Activated CD4-positive, alpha-beta T cell treated with anti-CD3 and anti-CD28 coated beads for 36 hours (primary cell): ENCODE measurements at regions of chr19 and their contacts with region 1.

Region 1: DNA sequence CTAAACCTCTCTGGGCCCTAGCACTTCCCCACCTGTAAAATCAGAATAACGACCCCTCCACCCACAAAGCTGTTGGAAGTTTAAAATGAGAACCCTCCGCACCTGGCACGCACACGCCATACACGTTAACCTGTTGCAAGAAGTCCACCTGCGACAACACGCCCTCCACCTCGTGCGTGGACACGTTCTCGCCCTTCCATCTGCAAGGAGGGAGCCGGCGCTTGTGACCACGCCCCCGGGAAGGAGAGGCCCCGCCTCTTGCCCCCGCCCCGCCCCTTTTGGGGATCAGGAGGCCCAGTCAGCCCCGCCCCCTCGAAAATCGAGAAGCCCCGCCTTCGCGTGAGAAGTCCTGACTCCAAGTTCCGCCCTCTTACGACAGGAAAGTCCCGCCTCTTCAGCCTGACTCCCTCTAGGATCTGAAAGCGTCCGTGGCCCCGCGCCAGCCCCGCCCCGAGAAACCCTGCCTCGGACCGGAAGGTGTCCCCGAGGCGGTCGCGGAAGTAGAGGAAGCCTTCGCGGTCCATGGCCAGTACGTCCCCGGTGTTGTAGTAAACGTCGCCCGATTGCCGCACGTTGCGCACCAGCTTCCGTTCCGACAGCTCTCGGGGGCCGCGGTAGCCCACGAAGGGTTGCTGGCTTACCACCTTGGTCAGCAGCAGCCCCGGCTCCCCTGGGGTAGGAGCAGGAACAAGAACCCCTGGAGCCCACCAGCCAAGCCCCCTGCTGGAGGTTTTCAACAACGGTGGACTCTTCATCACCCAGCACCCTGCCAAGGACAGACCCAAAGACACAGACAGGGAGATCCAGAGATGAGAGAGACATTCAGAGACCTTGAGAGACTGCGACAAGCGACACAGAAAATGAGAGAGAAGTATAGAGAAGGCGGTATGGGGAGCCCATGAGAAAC is 12.5 kb downstream of the SLC27A5 start:
- DNase-seq: peak; percentile 100
- ATAC-seq: peak; percentile 99
- H3K4me3 Mint-ChIP-seq: peak overlapping the region; percentile 81
- H3K27ac Mint-ChIP-seq: peak overlapping the region; percentile 95
- H3K4me1 Mint-ChIP-seq: peaks cover 19% of the 10 kb centered on the region
- H3K27me3 Mint-ChIP-seq: no peaks in the 10 kb centered on the region

Region 2: GRCh38 chr19:58268344-58268743 is 230.9 kb before region 1 on chr19:
- CTCF ChIA-PET with region 1: no interaction called
- POLR2A ChIA-PET with region 1: no interaction called
- intact Hi-C with region 1: no loop called
- DNase-seq: no peak
- ATAC-seq: no peak
- H3K4me3 Mint-ChIP-seq: no peak overlapping the region
- H3K27ac Mint-ChIP-seq: no peak overlapping the region
- H3K4me1 Mint-ChIP-seq: no peaks in the 10 kb centered on the region
- H3K27me3 Mint-ChIP-seq: no peaks in the 10 kb centered on the region

Region 3: GRCh38 chr19:58278157-58279041 is 220.9 kb before region 1 on chr19 and contains the start of gene ZNF8:
- CTCF ChIA-PET with region 1: no interaction called
- POLR2A ChIA-PET with region 1: no interaction called
- intact Hi-C with region 1: loop called in 1 of 2 experiments (anchors 1 kb)
- DNase-seq: peak; percentile 99
- ATAC-seq: peak; percentile 98
- H3K4me3 Mint-ChIP-seq: peak within 1 kb of the TSS; percentile 98
- H3K27ac Mint-ChIP-seq: peak within 1 kb of the TSS; percentile 95
- H3K4me1 Mint-ChIP-seq: peaks cover 28% of the 10 kb centered on the region
- H3K27me3 Mint-ChIP-seq: no peaks in the 10 kb centered on the region
- total RNA-seq, gene ZNF8: 4.4 to 4.5 TPM

Region 4: DNA sequence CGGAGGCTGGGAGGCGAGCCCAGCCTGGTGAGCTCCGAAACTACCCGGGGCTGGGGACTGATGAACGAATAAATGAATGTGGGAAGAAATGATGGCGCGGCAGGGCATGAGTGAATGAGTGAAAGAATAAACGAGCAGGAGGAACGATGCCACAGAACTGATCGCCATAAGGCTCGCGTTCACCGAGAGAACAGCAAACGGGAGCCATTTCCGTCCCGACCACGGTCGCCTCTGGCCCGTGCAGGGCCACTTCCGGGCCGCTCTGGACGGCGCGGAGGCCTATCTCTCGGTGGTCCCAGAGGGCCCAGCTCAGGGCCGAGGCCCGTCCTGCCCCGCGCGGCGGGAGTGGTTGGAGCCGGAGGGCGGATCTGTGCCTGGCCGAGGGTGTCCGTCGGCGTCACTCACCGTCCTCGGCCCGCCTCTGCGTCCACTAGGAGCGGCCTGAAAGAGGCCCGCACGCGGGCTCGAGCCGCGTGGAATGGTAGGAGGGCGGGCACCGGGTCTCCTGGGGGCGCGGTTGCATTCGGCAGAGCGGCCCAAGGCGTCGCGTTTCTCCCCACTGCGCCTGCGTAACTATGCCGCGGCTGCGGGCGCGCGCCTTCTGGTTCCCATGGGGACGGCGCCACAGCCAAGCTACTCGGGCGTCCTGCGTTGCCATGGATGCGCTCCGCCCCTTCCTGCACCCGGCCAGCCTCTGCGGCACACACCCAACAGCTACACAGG is 136.8 kb before region 1 on chr19 and contains the start of gene ZNF497:
- CTCF ChIA-PET with region 1: no interaction called
- POLR2A ChIA-PET with region 1: no interaction called
- intact Hi-C with region 1: loop called in 1 of 2 experiments (anchors 1 kb)
- DNase-seq: peak; percentile 99
- ATAC-seq: peak; percentile 94
- H3K4me3 Mint-ChIP-seq: peak within 1 kb of the TSS; percentile 86
- H3K27ac Mint-ChIP-seq: peak within 1 kb of the TSS; percentile 93
- H3K4me1 Mint-ChIP-seq: peaks cover 7% of the 10 kb centered on the region
- H3K27me3 Mint-ChIP-seq: no peaks in the 10 kb centered on the region
- total RNA-seq, gene ZNF497: 1.1 to 1.5 TPM

Region 5: GRCh38 chr19:58408152-58409009 is 90.9 kb before region 1 on chr19 and contains the start of gene ZNF584:
- CTCF ChIA-PET with region 1: interaction called, 3 read pairs
- POLR2A ChIA-PET with region 1: no interaction called
- intact Hi-C with region 1: loop called in 1 of 2 experiments (anchors 1 kb)
- DNase-seq: peak; percentile 97
- ATAC-seq: peak; percentile 97
- H3K4me3 Mint-ChIP-seq: peak within 1 kb of the TSS; percentile 84
- H3K27ac Mint-ChIP-seq: peak within 1 kb of the TSS; percentile 92
- H3K4me1 Mint-ChIP-seq: peaks cover 29% of the 10 kb centered on the region
- H3K27me3 Mint-ChIP-seq: no peaks in the 10 kb centered on the region
- total RNA-seq, gene ZNF584: 9.9 to 11.2 TPM

Region 6: DNA sequence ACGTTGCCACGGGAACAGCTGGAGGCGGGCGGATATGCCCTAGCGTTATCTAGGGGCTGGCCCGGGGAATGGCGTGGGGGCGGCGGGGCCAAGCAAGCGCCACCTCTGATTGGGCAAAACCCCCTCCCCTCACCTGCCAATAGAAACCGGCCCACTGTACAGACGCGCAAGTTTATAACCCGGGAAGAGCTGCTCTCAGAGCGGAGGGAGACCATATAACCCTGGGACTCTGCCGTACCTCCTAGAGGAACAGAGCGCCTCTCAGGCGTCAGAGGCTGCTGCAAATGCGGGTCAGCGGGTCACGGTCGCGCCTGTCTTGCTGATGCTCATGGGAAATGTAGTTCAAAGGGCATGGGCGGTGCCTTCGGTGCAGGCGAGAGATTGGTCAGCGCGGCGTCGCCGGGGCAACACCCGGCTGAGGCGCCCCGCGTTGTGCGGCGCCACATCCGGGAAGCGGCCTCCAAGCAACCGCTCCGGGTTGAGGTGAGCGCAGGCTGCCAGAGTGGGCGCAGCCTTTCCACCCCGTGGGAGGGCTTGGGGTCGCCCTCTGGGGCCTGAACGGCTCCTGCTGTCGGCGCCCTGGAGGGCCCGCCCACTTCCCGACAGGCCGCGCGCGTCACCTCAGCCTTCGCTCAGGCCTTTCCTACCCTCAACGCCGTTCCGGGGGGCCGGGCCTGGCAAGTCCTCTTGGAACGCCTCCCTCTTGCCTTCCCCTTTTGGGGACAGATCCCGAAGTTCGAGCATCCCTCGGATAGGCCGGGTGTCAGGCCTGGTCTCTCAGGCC is 23.4 kb before region 1 on chr19 and contains the start of gene ZNF446:
- CTCF ChIA-PET with region 1: no interaction called
- POLR2A ChIA-PET with region 1: no interaction called
- intact Hi-C with region 1: loop called (anchors 1 kb)
- DNase-seq: peak; percentile 98
- ATAC-seq: peak; percentile 92
- H3K4me3 Mint-ChIP-seq: peak within 1 kb of the TSS; percentile 83
- H3K27ac Mint-ChIP-seq: peak within 1 kb of the TSS; percentile 96
- H3K4me1 Mint-ChIP-seq: peaks cover 14% of the 10 kb centered on the region
- H3K27me3 Mint-ChIP-seq: no peaks in the 10 kb centered on the region
- total RNA-seq, gene ZNF446: 4.2 to 4.7 TPM

Region 7: DNA sequence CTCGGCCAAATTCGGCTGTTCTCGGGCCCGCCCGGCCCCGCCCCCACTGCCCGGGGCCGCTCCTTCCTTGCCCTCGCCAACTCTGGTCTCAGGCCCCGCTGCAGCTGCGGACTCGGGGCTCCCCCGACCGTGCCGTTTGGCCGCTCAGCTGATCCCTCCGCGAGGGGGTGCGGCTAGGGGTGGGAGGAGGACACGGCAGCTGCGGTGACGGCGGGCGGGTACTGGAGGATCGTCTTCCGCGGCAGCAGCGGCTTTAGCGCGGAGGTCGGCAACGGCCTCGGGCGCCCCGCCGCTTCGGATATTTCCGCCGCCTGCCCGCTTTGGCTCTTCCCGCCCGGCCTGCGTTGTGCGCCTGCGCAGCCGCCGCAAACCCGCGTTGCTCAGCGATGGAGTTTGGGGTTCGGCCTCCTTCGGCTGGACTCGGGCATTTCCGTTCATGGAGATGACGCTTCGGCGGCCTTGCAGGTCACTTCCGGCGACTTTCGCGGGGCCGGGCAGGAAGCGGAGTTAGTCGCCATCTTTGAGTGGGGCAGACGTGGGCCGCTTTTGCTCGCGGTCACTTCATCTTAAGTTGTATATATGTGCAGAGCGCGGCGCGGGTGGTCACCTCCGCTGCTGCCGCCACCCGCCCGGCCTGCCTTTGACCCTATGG is 59.5 kb after region 1 on chr19:
- CTCF ChIA-PET with region 1: no interaction called
- POLR2A ChIA-PET with region 1: no interaction called
- intact Hi-C with region 1: loop called in 1 of 2 experiments (anchors 1 kb)
- DNase-seq: peak; percentile 100
- ATAC-seq: peak; percentile 69
- H3K4me3 Mint-ChIP-seq: peak overlapping the region; percentile 92
- H3K27ac Mint-ChIP-seq: peak overlapping the region; percentile 100
- H3K4me1 Mint-ChIP-seq: peaks cover 65% of the 10 kb centered on the region
- H3K27me3 Mint-ChIP-seq: no peaks in the 10 kb centered on the region